Right ventricle myocardium superior (tissue), 1 donor: ENCODE measurements at regions of chr6 and their contacts with region 1.

Region 1: DNA sequence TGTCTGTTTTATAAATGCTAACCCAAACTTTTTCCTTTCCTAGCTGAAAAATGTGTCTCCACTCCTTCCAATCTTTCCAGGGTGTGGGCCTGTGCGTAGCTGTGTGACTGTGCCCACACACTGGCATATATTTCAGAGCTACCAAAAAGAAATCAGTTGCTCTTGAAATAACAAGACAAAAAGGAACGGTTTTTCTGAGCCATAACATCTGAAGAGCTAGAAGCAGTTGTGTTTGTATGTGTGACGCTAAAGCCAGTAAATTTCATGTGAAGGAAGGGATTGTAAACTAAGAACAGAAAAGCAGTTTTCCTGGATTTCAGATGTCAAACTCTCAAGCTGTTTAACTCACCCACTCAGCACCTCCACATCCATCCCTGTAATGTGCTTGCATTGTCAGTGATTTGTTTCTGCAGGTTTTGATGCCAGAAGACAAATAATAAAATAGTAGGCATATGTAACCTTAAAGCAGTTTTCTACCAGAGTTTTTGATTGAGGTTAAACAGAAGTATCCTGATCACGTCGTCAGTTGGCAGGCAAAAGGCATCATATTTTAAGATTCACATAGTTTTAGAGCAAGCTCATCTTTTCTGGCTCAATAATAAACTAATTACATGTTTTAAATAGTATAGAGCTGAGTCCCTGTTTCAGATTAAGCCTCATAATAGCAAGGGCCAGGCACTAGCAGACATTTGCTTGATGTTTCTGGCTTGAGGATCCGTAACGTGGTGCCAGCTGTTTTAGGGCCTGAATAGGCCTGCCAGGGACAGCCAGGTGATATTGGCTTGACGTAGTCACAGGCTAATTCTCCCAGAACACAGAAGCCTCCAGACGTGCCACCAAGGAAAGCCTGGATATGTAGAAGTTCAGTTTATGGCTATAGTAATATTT is 90.9 kb downstream of the FOXO3 start:
- DNase-seq: peak; percentile 57
- ATAC-seq: peak; percentile 50

Region 2: GRCh38 chr6:108510461-108511319 is 140.9 kb before region 1 on chr6:
- intact Hi-C with region 1: no loop called
- DNase-seq: no peak
- ATAC-seq: no peak

Region 3: DNA sequence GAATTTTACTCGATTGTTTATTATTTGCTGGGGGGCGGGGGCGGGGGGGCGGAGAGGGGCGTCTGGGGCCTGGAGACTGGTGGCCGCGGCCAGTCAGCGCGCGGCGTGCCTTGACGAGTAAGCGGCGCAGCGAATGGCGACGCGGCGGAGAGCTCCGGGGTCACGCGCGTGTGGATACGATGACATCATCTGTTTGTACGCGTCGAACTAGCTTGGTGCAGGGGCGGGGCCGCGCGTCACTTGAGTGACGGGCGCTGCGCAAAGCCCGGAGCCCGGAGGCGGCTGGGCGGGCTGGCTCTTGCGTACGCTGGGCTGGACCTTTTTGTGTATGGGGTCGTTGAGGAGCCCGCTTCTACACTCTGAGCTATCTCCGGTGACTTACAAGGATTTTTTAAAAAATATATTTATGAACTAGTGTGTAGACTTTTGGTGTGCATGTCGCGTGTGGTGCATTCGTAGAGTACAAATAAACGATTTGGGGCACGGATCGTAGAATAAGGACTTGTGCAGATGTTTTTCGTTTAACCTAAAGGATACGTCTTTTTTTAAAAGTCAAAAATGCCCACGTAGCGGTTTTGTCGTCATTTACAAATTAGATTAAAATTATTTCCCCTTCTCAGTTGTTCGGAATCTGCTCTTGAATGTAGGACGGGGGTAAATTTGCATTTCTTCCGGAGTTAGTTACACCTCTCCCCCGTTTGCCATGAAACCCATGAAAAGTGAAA is 93.0 kb before region 1 on chr6:
- intact Hi-C with region 1: loop called (anchors 5 kb)
- DNase-seq: peak; percentile 99
- ATAC-seq: peak; percentile 65

Region 4: DNA sequence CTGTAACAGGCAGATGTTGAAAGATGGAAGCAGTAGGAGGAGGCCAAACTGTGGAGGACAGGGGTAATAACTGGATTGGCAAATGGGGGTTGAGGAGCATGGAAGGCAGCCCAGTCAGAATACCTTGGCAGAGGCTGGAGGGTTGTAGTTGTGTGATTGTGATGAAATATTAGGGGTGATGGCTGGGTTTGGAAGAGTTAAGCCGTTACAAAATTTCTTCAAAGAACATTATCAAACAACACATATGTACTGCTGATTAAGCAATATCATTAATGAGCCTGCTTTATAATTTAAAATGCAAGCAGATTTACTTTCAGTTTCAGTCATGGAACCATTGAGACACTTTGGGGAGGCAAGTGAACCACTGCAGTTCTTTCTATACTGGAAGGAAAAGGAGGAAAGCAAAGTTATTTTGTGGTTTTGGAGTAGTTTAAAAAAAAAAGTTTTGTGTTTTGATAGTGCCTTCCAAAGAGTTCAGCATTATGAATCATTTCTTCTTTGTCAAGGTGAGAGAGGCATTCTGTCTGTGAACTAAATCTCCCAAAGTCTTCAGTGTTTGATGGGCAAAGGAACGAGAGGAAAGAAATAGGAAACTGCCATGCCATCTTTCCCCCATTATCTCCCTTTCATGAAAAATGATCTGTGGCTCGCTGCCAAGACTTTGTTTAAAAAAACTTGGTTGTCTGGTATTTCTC is 70.2 kb before region 1 on chr6:
- intact Hi-C with region 1: loop called (anchors 5 kb)
- DNase-seq: peak; percentile 57
- ATAC-seq: peak; percentile 55